ENCODE measurements at regions of chr1 and their contacts with region 1.

Region 1: DNA sequence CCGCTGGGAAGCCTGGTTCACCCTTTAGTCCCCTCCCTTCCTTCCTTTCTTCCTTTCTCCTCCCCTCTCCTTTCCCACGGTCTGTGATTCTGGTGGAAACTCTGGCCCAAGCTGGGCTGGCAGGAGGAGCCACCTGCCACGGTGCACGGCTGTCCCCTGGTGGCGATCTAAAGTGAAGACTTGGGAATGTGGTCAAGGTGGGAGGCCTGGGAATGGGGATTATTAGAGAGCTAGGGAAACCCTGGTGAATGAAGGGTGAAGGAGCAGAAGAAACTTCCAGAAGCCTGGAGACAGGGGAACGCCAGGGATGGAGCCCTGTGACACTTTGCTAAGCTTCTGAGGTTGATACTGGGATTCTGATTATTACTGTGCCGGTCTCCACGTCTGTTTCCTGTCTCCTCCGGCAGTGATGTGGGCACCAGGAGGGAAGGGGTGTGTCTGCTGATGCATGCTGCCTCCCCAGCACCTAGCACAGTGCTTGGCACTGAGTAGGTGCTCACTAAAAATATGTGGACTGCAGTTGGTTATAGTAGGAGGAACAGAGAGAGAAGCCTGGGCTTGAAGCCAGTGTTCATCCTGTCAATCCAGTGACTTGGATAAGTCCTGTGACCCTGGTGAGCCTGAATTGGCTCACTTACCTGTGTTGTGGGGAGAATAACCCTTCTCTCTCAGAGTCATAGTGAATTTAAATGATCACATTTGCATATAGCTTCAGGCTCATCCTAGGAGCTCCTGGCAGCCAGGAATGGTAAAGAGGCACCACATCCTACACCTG is 71.2 kb upstream of the NBPF3 start:
- DNase-seq: peak; percentile 66 to 98 (median 84)

Region 2: DNA sequence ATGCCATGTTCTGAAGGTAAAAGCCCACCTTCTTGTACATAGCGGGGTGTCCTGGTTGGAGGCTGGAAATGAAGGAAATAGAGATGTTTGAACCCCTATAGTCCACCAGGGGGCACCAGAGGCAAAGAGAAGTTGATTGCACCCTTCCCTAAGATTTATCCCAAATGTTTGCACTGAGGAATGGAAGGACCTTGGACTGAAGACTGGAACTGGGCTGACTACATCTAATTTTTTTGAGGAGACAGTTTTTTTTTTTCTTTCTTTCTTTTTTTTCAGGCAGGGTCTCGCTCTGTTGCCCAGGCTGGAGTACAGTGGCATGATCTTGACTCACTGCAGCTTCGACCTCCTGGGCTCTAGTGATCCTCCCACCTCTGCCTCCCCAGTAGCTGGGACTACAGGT is 136.7 kb before region 1 on chr1:
- intact Hi-C with region 1: loop called (anchors 1 kb)
- DNase-seq: peak in 6 of 10 donors; percentile 24 to 64 (median 36)

Region 3: DNA sequence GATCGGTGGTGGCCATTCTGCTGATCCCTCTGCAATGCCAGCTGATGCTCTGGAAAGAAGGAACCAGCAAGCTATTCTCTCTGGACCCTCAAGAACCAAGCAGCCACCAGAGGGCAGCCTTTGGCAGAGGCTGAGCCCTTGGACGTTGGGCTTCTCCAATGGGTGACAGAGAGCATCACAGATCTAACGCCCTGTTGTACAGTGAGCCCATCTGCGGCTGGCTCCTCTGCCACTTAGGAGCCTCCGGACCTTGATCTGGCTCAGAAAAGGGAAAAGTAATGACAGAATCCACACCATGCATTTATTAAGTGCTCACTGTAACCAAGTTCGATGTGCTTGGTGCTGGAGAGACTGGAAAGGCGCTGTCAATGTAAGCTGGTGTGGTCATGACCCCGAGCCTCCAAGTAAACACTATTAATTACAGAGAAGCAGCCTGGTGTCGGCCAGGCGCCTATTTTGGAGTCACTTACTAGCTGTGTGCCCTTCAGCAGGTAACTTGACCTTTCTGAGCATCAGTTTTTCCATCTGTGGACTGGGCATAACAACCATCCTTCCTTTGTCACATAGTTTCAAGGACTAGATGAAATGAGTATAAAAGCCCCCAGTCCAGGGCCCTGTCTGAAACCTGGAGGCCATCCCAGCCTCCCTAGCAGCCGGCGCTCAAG is 113.3 kb before region 1 on chr1:
- intact Hi-C with region 1: loop called (anchors 1 kb)
- DNase-seq: peak; percentile 83 to 99 (median 96)

Region 4: GRCh38 chr1:21302747-21303715 is 65.7 kb before region 1 on chr1:
- intact Hi-C with region 1: loop called (anchors 10 kb)
- DNase-seq: peak in 2 of 10 donors; percentile 41 to 64

Region 5: GRCh38 chr1:21607549-21608529 is 239.1 kb after region 1 on chr1:
- intact Hi-C with region 1: no loop called
- DNase-seq: peak in 1 of 10 donors; percentile 92

Measured in posterior cingulate gyrus (tissue), 11 donors.